Common myeloid progenitor, CD34-positive (primary cell): ENCODE measurements at regions of chr21 and their contacts with region 1.

Region 1: GRCh38 chr21:41369105-41369919 is 7.5 kb downstream of the MX2 start:
- DNase-seq: peak; percentile 51 to 70 (median 59)
- H3K4me3 ChIP-seq: peak overlapping the region in 6 of 7 experiments; percentile 9 to 80 (median 56)
- H3K27ac ChIP-seq: no peak overlapping the region
- H3K4me1 ChIP-seq: peaks cover 6 to 23% (median 10%) of the 10 kb centered on the region in 4 experiments
- H3K27me3 ChIP-seq: peaks cover 0 to 2% (median 0%) of the 10 kb centered on the region in 5 experiments

Region 2: DNA sequence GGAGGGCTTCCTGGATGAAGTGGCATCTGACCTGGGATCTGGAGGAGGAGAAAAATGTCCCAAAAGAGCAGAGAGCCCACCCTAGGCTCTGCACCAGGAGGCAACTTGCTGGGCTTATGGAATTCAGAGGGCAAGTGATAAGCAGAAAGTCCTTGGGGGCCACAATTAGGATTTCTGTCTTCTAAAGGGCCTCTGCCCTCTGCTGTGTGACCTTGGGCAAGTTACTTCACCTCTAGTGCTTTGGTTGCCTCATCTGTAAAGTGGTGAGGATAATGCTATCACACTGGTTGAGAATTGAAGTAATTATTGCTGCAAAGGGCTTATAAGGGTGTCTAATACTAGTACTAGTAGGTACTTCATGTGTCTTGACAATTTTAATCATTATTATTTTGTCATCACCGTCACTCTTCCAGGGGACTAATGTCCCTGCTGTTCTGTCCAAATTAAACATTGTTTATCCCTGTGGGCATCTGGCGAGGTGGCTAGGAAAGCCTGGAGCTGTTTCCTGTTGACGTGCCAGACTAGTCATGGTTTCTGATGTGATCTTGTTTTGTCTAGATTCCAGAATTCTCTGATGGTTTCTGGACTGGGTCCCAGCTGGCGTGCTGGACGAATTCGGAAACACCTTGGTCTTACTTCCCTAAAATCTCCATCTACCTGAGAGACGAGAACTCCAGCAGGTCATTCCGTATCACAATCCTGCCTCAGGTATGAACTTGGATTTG is 119.0 kb before region 1 on chr21:
- CTCF ChIA-PET with region 1: no interaction called
- POLR2A ChIA-PET with region 1: no interaction called
- DNase-seq: no peak
- H3K4me3 ChIP-seq: no peak overlapping the region
- H3K27ac ChIP-seq: no peak overlapping the region
- H3K4me1 ChIP-seq: no peaks in the 10 kb centered on the region
- H3K27me3 ChIP-seq: no peaks in the 10 kb centered on the region

Region 3: DNA sequence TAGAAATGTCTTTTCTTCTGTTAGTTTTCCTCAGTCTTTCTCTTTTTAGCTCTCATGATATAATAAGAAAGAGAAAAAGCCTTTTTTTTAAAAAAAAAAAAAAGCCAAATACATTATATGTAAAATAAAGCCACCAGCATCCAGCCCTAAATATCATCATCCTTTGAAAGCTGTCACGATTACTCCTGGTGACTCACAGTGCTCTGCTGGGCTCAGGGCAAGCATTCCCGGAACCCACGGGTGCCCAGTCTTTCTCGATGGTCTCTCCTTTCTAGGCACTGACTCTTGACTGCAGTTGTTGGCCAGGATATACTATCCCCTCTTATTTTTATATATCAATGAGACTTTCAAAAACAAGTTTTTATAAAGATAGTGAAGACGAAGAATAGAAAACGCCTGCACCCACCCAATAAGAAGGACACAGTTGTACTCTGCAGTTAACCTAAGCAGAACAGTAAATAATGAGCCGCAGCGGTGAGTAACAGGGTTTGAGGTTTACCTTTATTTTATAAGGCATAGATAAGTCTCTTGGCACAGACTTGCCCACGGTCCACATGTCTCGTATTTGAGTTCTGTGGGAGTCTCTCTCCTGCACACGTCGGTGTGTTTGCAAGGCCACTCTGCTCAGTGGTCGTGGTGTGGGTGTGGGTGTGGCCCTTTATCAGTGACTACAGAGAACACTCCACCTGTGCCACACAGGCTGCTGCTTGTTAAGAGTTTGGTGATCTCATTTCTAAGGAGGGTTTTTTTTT is 23.2 kb before region 1 on chr21:
- CTCF ChIA-PET with region 1: no interaction called
- POLR2A ChIA-PET with region 1: no interaction called
- DNase-seq: peak in 1 of 3 donors; percentile 12
- H3K4me3 ChIP-seq: no peak overlapping the region
- H3K27ac ChIP-seq: no peak overlapping the region
- H3K4me1 ChIP-seq: peaks cover 0 to 6% (median 1%) of the 10 kb centered on the region in 4 experiments
- H3K27me3 ChIP-seq: no peaks in the 10 kb centered on the region

Region 4: GRCh38 chr21:41380617-41381016 is 11.3 kb after region 1 on chr21:
- CTCF ChIA-PET with region 1: interaction called, 10 read pairs
- POLR2A ChIA-PET with region 1: no interaction called
- DNase-seq: no peak
- H3K4me3 ChIP-seq: no peak overlapping the region
- H3K27ac ChIP-seq: no peak overlapping the region
- H3K4me1 ChIP-seq: peaks cover 0 to 5% (median 0%) of the 10 kb centered on the region in 4 experiments
- H3K27me3 ChIP-seq: no peaks in the 10 kb centered on the region

Region 5: GRCh38 chr21:41403331-41403730 is 34.0 kb after region 1 on chr21:
- CTCF ChIA-PET with region 1: no interaction called
- POLR2A ChIA-PET with region 1: no interaction called
- DNase-seq: no peak
- H3K4me3 ChIP-seq: no peak overlapping the region
- H3K27ac ChIP-seq: no peak overlapping the region
- H3K4me1 ChIP-seq: peaks cover 0 to 3% (median 0%) of the 10 kb centered on the region in 4 experiments
- H3K27me3 ChIP-seq: no peaks in the 10 kb centered on the region